Right cardiac atrium (tissue), 5 donors: ENCODE measurements at regions of chr19 and their contacts with region 1.

Region 1: DNA sequence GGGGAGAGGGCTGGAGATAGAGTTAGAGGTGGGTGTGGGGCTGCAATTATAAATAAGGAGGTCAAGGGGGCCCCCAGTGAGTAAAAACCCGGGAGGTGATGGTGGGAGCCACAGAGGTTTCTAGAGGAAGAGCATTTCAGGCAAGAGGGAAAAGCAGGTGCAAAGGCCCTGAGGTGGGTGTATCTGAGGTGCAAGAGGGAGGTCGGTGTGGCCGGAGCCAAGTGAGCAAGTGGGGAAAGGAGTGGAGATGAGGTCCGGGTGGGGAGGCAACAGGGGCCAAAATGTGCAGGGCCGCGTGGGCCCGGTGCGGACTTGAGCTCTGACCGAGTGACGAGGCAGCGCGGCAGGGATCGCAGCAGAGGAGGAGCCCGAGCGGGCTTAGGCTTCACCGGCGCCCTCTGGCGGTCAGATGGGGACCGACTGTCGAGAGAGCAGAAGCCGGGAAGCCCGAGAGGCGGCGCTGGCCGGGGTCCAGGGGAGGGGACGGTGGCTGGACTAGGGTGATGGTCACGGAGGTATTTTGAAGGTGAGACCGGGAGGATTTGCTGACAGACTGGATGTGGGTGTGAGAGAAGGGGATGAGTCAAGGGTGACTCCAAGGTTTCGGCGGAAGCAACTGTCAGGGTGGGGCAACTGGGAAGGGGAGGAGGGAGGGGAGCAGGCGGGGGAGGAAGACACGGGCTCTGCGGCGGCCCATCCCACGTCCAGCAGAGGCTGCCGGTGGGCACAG is 17.7 kb upstream of the SPACA4 start:
- DNase-seq: peak; percentile 94 to 98 (median 98)
- ATAC-seq: peak; percentile 88 to 89
- H3K4me3 ChIP-seq: peak overlapping the region; percentile 23
- H3K27ac ChIP-seq: no peak overlapping the region
- H3K4me1 ChIP-seq: no peaks in the 10 kb centered on the region
- H3K27me3 ChIP-seq: no peaks in the 10 kb centered on the region

Region 2: GRCh38 chr19:48310227-48310626 is 278.6 kb before region 1 on chr19:
- intact Hi-C with region 1: loop called in 1 of 4 experiments (anchors 10 kb)
- DNase-seq: peak in 1 of 3 donors; percentile 24
- ATAC-seq: peak; percentile 68 to 82
- H3K4me3 ChIP-seq: no peak overlapping the region
- H3K27ac ChIP-seq: no peak overlapping the region
- H3K4me1 ChIP-seq: no peaks in the 10 kb centered on the region
- H3K27me3 ChIP-seq: no peaks in the 10 kb centered on the region

Region 3: GRCh38 chr19:48492925-48493717 is 95.7 kb before region 1 on chr19:
- intact Hi-C with region 1: loop called in 3 of 4 experiments (anchors 5 kb)
- DNase-seq: peak; percentile 98 to 99 (median 98)
- ATAC-seq: peak; percentile 92 to 93
- H3K4me3 ChIP-seq: peak overlapping the region; percentile 71
- H3K27ac ChIP-seq: peak overlapping the region; percentile 28
- H3K4me1 ChIP-seq: no peaks in the 10 kb centered on the region
- H3K27me3 ChIP-seq: no peaks in the 10 kb centered on the region

Region 4: GRCh38 chr19:48501496-48502350 is 87.1 kb before region 1 on chr19:
- intact Hi-C with region 1: loop called in 3 of 4 experiments (anchors 2 to 5 kb)
- DNase-seq: peak; percentile 46 to 80 (median 70)
- ATAC-seq: peak; percentile 38 to 55
- H3K4me3 ChIP-seq: no peak overlapping the region
- H3K27ac ChIP-seq: no peak overlapping the region
- H3K4me1 ChIP-seq: no peaks in the 10 kb centered on the region
- H3K27me3 ChIP-seq: no peaks in the 10 kb centered on the region